ENCODE measurements at regions of chr12 and their contacts with region 1.

Region 1: DNA sequence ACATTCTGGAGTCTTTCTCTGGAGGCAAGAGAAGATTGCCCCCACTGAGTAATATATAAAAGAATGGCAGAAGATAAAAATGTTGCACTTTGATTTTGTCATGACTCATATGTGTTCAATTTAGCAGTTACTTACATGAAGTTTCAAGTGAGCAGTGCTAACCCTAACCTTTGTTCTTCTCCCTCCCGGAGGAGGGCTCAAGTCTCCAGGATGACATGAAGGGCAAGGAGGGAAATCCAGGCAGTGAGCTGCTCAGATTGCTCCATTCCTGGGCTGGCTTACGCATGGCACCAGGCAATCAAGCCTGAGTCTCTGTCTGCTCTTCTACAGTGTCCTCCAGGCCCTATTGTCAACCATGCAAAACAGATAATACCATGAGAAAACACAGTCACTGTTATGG is 322.3 kb downstream of the DUSP6 start:
- DNase-seq: no peak
- H3K4me3 ChIP-seq: no peak overlapping the region
- H3K27ac ChIP-seq: no peak overlapping the region
- H3K4me1 ChIP-seq: no peaks in the 10 kb centered on the region
- H3K27me3 ChIP-seq: no peaks in the 10 kb centered on the region
- CTCF ChIP-seq: no peak
- EP300 ChIP-seq: no peak
- POLR2A ChIP-seq: no peak

Region 2: DNA sequence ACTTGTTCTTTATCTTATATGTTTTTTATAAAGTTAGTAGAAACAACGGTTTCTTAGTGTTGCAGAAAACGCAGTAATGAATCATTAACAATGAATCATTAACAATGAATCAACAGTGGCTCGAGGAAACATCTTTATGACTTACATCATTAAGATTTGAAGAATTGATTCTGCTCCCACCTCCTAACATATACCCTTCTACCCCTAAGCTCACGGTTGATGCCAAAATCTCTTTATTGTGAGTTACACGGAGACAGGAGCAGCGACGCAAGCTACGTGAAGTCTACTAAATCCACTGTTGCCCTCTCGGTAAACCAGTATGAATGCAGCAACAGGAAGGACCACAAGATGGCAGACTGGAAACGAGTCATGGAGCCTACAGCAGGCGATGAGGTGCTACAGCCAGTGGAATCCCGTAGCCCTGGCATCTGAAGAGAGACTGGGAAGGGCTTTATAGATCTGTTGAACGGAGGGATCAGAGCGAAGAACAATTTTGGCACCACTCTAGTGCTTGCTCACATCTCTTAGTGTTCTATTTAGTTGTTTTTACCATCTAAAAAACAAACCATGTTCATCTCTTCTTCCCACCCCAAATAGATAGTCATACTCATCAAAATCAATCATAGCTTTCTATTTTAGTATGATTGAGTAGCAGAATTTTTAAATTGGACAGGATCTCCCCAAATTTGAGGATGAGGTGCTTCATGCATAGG is 10.4 kb before region 1 on chr12:
- in situ Hi-C with region 1: no loop called
- intact Hi-C with region 1: loop called (anchors 1 kb)
- DNase-seq: peak; percentile 86
- H3K4me3 ChIP-seq: no peak overlapping the region
- H3K27ac ChIP-seq: no peak overlapping the region
- H3K4me1 ChIP-seq: peaks cover 0 to 15% (median 4%) of the 10 kb centered on the region in 4 donors
- H3K27me3 ChIP-seq: no peaks in the 10 kb centered on the region
- CTCF ChIP-seq: peak; percentile 76 to 86 (median 81)
- EP300 ChIP-seq: no peak
- POLR2A ChIP-seq: no peak